A673 (cell line): ENCODE measurements at regions of chr15 and their contacts with region 1.

Region 1: DNA sequence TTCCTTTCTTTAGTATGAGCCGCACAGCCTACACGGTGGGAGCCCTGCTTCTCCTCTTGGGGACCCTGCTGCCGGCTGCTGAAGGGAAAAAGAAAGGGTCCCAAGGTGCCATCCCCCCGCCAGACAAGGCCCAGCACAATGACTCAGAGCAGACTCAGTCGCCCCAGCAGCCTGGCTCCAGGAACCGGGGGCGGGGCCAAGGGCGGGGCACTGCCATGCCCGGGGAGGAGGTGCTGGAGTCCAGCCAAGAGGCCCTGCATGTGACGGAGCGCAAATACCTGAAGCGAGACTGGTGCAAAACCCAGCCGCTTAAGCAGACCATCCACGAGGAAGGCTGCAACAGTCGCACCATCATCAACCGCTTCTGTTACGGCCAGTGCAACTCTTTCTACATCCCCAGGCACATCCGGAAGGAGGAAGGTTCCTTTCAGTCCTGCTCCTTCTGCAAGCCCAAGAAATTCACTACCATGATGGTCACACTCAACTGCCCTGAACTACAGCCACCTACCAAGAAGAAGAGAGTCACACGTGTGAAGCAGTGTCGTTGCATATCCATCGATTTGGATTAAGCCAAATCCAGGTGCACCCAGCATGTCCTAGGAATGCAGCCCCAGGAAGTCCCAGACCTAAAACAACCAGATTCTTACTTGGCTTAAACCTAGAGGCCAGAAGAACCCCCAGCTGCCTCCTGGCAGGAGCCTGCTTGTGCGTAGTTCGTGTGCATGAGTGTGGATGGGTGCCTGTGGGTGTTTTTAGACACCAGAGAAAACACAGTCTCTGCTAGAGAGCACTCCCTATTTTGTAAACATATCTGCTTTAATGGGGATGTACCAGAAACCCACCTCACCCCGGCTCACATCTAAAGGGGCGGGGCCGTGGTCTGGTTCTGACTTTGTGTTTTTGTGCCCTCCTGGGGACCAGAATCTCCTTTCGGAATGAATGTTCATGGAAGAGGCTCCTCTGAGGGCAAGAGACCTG is 13.2 kb downstream of the GREM1 start:
- DNase-seq: peak; percentile 28
- H3K4me3 ChIP-seq: no peak overlapping the region
- H3K27ac ChIP-seq: no peak overlapping the region
- H3K4me1 ChIP-seq: no peaks in the 10 kb centered on the region
- H3K27me3 ChIP-seq: peaks cover 23% of the 10 kb centered on the region
- CTCF ChIP-seq: no peak

Region 2: DNA sequence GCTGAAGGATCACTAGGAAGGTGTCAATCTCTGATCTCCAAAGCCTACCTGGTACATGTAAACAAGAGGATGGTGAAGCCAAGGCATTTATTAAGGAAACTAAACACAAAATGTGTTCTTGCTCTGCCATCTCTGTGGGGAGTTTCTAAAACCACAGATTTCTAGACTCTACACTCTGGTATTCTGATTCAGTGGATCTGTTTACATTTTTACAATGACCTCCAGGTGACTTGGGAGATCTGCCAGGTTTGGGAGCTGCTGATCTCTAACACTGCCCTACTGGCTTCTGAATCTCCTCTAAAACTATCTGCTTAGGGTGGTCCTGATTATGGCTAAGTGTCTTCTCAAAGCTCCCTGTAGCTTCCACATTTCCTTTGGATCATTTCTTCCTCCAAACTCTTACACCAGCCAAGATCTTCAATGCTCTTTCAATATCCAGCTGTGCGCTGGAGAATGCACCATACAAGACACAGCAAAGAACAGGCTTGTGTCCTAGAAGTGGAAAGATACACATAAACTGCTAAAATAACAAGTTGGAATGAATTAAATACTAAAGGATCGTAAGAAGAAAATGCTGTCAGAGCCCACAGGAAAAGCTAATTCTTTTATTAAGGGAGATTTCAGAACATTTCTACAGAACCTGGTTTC is 59.5 kb after region 1 on chr15:
- CTCF ChIA-PET with region 1: no interaction called
- POLR2A ChIA-PET with region 1: no interaction called
- intact Hi-C with region 1: loop called (anchors 10 kb)
- DNase-seq: no peak
- H3K4me3 ChIP-seq: no peak overlapping the region
- H3K27ac ChIP-seq: no peak overlapping the region
- H3K4me1 ChIP-seq: no peaks in the 10 kb centered on the region
- H3K27me3 ChIP-seq: no peaks in the 10 kb centered on the region
- CTCF ChIP-seq: no peak